ENCODE measurements at regions of chr20 and their contacts with region 1.

Region 1: GRCh38 chr20:51306503-51307358 is 235.8 kb downstream of the NFATC2 start:
- DNase-seq: peak; percentile 66 to 78
- ATAC-seq: peak; percentile 98 to 100
- H3K4me3 ChIP-seq: no peak overlapping the region
- H3K27ac ChIP-seq: peak overlapping the region; percentile 26 to 41; a peak in 4 of 6 replicates
- H3K4me1 ChIP-seq: 0 out of 3 replicates have a peak, but pooled peaks cover 3% of the 10 kb centered on the region
- CTCF ChIP-seq: peak; percentile 94
- EP300 ChIP-seq: no peak
- POLR2A ChIP-seq: no peak
- RAD21 ChIP-seq: peak; percentile 95 to 97

Region 2: DNA sequence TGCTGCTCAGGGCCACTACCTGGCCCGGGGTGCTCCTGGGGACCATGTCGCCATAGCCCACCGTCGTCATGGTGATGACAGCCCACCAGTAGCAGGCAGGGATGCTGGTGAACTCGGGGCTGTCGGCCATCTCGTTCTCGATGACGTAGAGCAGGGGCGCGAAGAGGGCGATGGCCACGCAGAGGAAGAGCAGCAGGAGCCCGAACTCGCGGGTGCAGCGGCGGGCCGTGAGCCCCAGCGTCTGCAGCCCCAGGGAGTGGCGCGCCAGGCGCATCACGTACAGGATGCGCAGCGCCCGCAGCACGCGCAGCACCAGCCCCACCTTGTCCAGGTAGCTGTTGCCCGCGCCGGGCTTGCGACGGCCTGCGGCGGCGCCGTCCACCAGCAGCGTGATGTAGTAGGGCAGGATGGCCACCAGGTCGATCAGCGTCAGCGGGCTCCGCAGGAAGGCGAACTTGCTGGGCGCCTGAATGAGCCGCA is 302.4 kb before region 1 on chr20:
- CTCF ChIA-PET with region 1: interaction called, 565 read pairs
- POLR2A ChIA-PET with region 1: no interaction called
- DNase-seq: no peak
- ATAC-seq: no peak
- H3K4me3 ChIP-seq: no peak overlapping the region
- H3K27ac ChIP-seq: no peak overlapping the region
- H3K4me1 ChIP-seq: no peaks in the 10 kb centered on the region
- CTCF ChIP-seq: no peak
- EP300 ChIP-seq: no peak
- POLR2A ChIP-seq: no peak
- RAD21 ChIP-seq: no peak

Region 3: GRCh38 chr20:51029963-51030920 is 276.5 kb before region 1 on chr20:
- CTCF ChIA-PET with region 1: interaction called, 53 read pairs
- POLR2A ChIA-PET with region 1: no interaction called
- DNase-seq: no peak
- ATAC-seq: no peak
- H3K4me3 ChIP-seq: no peak overlapping the region
- H3K27ac ChIP-seq: peak overlapping the region in 1 of 2 experiments; percentile 26; a peak in 1 of 6 replicates
- H3K4me1 ChIP-seq: peaks cover 17% of the 10 kb centered on the region
- CTCF ChIP-seq: no peak
- EP300 ChIP-seq: no peak
- POLR2A ChIP-seq: no peak
- RAD21 ChIP-seq: no peak

Region 4: DNA sequence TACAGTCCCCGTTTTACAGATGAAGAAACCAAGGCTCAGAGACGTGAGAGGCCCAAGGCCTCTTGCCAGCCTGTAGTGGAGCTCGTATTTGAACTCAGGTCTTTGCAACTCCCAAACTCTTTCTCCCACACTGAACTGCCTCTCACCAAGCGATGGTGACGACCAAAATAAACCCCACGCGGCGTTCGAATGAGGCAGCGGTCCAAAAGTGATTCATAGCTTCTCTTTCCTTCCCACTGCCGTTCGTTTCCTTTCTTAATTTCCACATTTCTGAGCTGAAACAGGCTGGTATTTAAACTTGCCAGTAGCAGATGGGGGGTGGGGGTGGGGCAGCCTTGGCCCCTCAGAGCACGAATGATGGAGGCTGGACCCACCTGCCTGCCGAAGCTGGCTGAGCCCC is 30.9 kb before region 1 on chr20:
- CTCF ChIA-PET with region 1: interaction called, 11 read pairs
- POLR2A ChIA-PET with region 1: no interaction called
- DNase-seq: no peak
- ATAC-seq: no peak
- H3K4me3 ChIP-seq: no peak overlapping the region
- H3K27ac ChIP-seq: no peak overlapping the region
- H3K4me1 ChIP-seq: no peaks in the 10 kb centered on the region
- CTCF ChIP-seq: no peak
- EP300 ChIP-seq: no peak
- POLR2A ChIP-seq: no peak
- RAD21 ChIP-seq: no peak

Region 5: GRCh38 chr20:51318058-51318895 is 11.5 kb after region 1 on chr20:
- CTCF ChIA-PET with region 1: interaction called, 94 read pairs
- POLR2A ChIA-PET with region 1: no interaction called
- DNase-seq: peak; percentile 32 to 37
- ATAC-seq: peak in 1 of 2 experiments; percentile 84; a peak in 3 of 6 replicates
- H3K4me3 ChIP-seq: no peak overlapping the region
- H3K27ac ChIP-seq: peak overlapping the region in 1 of 2 experiments; percentile 47; a peak in 1 of 6 replicates
- H3K4me1 ChIP-seq: no peaks in the 10 kb centered on the region
- CTCF ChIP-seq: peak; percentile 43
- EP300 ChIP-seq: no peak
- POLR2A ChIP-seq: no peak
- RAD21 ChIP-seq: 0 out of 5 replicates have a peak, but pooled peaks of 1 of the 2 experiments have one; percentile 5

Region 6: GRCh38 chr20:51335329-51335841 is 28.7 kb after region 1 on chr20:
- CTCF ChIA-PET with region 1: interaction called, 16 read pairs
- POLR2A ChIA-PET with region 1: no interaction called
- DNase-seq: peak; percentile 40 to 84
- ATAC-seq: peak; percentile 88 to 90
- H3K4me3 ChIP-seq: no peak overlapping the region
- H3K27ac ChIP-seq: peak overlapping the region; percentile 71 to 84
- H3K4me1 ChIP-seq: peaks cover 15% of the 10 kb centered on the region; the same call in 2 of the 3 replicates
- CTCF ChIP-seq: no peak
- EP300 ChIP-seq: peak; percentile 74 to 95; a peak in 4 of 5 replicates
- POLR2A ChIP-seq: no peak
- RAD21 ChIP-seq: no peak

Region 7: GRCh38 chr20:51434580-51435247 is 128.0 kb after region 1 on chr20:
- CTCF ChIA-PET with region 1: no interaction called
- POLR2A ChIA-PET with region 1: no interaction called
- DNase-seq: peak in 1 of 2 experiments; percentile 60
- ATAC-seq: peak; percentile 77 to 84; a peak in 5 of 6 replicates
- H3K4me3 ChIP-seq: no peak overlapping the region
- H3K27ac ChIP-seq: peak overlapping the region; percentile 47 to 78
- H3K4me1 ChIP-seq: peaks cover 23% of the 10 kb centered on the region
- CTCF ChIP-seq: no peak
- EP300 ChIP-seq: no peak
- POLR2A ChIP-seq: no peak
- RAD21 ChIP-seq: no peak

Measured in A549 (cell line).